ENCODE measurements at regions of chr17 and their contacts with region 1.

Region 1: DNA sequence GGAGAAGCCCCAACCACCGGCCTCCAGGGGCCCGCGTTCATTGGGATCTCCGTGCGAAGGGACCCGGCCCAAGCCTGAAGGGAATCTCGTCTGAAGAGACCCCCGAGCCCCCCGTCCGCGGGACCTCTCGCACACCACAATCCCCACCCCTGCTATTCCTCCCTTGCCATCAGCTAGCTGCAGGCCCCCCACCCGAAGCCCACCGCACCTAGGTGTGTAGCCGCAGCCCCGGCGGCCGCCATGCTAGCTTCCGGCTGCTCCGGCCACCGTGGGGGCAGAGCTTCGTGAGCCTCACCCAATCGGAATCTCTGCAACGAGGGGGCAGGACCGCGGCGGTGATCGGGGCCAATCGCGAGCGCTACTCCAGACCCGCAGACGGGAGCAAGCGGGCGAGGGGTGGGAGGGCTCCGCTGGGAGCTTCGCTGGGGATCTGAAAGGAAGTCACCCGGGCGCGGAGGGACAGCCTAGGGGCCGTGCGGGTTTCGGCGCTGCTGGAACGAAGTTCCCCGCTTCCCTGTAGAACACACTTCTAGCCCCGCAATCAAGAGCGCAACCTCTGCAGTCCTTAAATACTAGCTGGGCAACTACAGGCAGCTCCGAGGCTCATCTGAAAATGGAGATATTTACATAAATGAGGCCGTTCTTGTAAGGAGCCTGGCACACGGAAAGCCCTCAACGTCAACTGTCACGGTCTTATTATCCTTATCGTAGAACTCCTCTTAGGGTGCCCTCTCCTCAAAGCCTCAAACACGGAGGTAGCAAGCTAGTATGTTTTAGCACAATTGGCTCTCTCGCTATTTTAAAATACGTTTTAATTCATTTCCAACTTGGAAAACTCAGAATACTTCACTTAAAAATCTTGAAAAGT is at the start of gene PIGS:
- DNase-seq: peak; percentile 60
- ATAC-seq: peak; percentile 99
- H3K4me3 ChIP-seq: peak within 1 kb of the TSS; percentile 87 to 89
- H3K27ac ChIP-seq: peak within 1 kb of the TSS; percentile 89
- H3K4me1 ChIP-seq: peaks cover 17% of the 10 kb centered on the region; the same call in 1 of the 2 replicates
- H3K27me3 ChIP-seq: no peaks in the 10 kb centered on the region
- CTCF ChIP-seq: no peak
- total RNA-seq, gene PIGS: 78.8 TPM

Region 2: GRCh38 chr17:28399808-28400207 is 171.7 kb before region 1 on chr17:
- CTCF ChIA-PET with region 1: interaction called, 10 read pairs
- POLR2A ChIA-PET with region 1: no interaction called
- in situ Hi-C with region 1: no loop called
- intact Hi-C with region 1: no loop called
- DNase-seq: no peak
- ATAC-seq: no peak
- H3K4me3 ChIP-seq: no peak overlapping the region
- H3K27ac ChIP-seq: no peak overlapping the region
- H3K4me1 ChIP-seq: peaks cover 8% of the 10 kb centered on the region; the same call in 1 of the 2 replicates
- H3K27me3 ChIP-seq: no peaks in the 10 kb centered on the region
- CTCF ChIP-seq: no peak

Region 3: DNA sequence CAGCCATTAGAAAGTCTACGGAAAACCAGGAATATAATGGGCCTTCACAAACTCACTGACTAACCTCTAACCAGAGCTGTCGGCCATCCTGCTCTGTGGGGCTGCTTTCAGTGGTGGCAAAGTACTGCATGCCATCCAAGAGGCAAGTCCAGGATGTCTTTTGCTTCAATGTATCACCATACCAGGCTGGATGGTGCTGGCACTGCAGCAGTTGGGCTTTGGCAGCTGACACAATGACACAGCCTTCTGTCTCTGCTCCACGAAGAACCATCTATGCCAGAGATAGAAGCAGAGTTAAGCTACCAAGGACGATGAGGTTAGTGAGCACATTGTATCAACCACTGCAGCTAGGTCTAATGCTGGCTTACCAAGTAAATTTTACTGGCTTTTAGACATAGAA is 52.2 kb after region 1 on chr17:
- CTCF ChIA-PET with region 1: no interaction called
- POLR2A ChIA-PET with region 1: interaction called, 11 read pairs
- in situ Hi-C with region 1: no loop called
- intact Hi-C with region 1: no loop called
- DNase-seq: no peak
- ATAC-seq: no peak
- H3K4me3 ChIP-seq: no peak overlapping the region
- H3K27ac ChIP-seq: no peak overlapping the region
- H3K4me1 ChIP-seq: no peaks in the 10 kb centered on the region
- H3K27me3 ChIP-seq: no peaks in the 10 kb centered on the region
- CTCF ChIP-seq: no peak

Region 4: GRCh38 chr17:28902819-28903545 is 331.5 kb after region 1 on chr17 and contains the start of gene DHRS13:
- CTCF ChIA-PET with region 1: no interaction called
- POLR2A ChIA-PET with region 1: interaction called, 12 read pairs
- in situ Hi-C with region 1: no loop called
- intact Hi-C with region 1: no loop called
- DNase-seq: peak; percentile 57
- ATAC-seq: peak; percentile 97
- H3K4me3 ChIP-seq: peak within 1 kb of the TSS; percentile 62 to 63
- H3K27ac ChIP-seq: peak within 1 kb of the TSS; percentile 48
- H3K4me1 ChIP-seq: peaks cover 7% of the 10 kb centered on the region
- H3K27me3 ChIP-seq: no peaks in the 10 kb centered on the region
- CTCF ChIP-seq: peak; percentile 100
- total RNA-seq, gene DHRS13: 5.2 TPM

Measured in Panc1 (cell line).